HAP-1 (cell line): ENCODE measurements at regions of chr17 and their contacts with region 1.

Region 1: DNA sequence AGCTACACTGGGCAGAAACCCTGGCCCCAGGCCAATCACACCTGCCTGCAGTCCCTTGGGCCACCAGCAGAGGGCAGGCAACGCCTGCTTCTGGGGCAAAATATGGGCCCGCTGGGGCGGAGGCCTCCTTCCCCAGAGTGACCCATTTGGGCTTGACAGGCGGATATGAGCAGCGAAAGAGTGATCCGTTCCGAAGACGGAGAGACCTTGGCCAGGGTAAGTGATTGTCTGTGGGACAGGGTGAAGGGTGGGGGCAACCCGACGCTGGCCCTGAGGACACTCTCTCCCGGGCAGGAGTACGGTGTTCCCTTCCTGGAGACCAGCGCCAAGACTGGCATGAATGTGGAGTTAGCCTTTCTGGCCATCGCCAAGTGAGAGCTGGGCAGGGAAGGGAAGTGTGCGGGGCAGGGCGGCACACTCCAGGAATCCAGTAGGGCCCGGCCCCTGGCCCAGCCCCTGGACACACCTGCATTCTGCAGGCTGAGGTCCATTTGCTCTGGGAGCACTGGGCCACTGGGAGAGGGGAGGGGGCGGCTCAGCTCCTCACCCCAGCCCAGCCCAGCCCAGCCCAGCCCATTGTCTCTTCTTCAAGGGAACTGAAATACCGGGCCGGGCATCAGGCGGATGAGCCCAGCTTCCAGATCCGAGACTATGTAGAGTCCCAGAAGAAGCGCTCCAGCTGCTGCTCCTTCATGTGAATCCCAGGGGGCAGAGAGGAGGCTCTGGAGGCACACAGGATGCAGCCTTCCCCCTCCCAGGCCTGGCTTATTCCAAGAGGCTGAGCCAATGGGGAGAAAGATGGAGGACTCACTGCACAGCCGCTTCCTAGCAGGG is 3.5 kb upstream of the NHERF1 start:
- DNase-seq: peak; percentile 53 to 86
- H3K4me3 ChIP-seq: no peak overlapping the region
- H3K4me1 ChIP-seq: no peaks in the 10 kb centered on the region
- H3K27me3 ChIP-seq: no peaks in the 10 kb centered on the region

Region 2: DNA sequence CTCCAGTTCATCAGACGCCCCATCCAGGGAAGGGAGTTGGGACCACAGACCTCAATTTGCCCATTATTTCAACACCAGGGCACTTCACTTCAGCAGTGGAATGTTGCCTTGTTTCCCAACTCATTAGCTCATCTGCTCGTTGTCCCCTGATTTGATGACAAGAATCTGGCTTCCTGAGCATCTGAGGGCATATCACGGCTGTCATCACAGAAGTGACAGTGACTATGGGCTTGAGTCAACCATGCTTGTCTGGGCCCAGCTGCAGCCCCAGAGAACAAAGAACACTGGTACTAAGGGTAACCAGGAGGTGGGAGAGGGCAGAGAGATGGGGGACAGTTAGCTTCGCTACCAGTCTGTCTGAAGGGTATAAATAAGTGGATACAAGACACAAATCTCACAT is 834.7 kb before region 1 on chr17:
- in situ Hi-C with region 1: no loop called
- DNase-seq: no peak
- H3K4me3 ChIP-seq: no peak overlapping the region
- H3K4me1 ChIP-seq: no peaks in the 10 kb centered on the region
- H3K27me3 ChIP-seq: no peaks in the 10 kb centered on the region

Region 3: GRCh38 chr17:74864866-74865395 is 120.0 kb after region 1 on chr17:
- in situ Hi-C with region 1: loop called (anchors 5 kb)
- DNase-seq: peak; percentile 41 to 83
- H3K4me3 ChIP-seq: no peak overlapping the region
- H3K4me1 ChIP-seq: no peaks in the 10 kb centered on the region
- H3K27me3 ChIP-seq: peaks cover 6% of the 10 kb centered on the region